CD14-positive monocyte (primary cell): ENCODE measurements at regions of chr9 and their contacts with region 1.

Region 1: DNA sequence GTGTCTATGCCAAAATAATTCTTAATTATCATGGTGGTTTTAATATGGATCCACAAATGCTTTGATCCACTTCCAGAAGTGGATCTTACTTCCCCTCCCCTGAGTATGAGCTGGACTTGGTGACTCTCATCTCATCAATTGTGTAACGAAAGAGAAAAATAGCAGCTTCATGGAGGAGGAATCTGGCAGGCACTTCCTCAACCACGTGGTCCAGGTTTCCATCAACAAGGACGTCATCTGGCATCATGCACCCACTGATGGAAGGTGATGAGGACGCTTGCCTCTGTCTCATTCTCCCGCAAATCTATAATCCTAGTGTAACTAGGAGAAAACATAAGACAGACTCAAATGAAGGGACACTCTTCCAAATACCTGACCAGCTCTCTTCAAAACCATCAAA is 54.6 kb upstream of the S1PR3 start:
- DNase-seq: peak; percentile 86 to 96 (median 93)
- H3K4me3 ChIP-seq: peak overlapping the region in 1 of 3 experiments; percentile 39
- H3K4me3 Mint-ChIP-seq: no peak overlapping the region
- H3K27ac ChIP-seq: peak overlapping the region; percentile 72 to 90
- H3K27ac Mint-ChIP-seq: peak overlapping the region; percentile 90 to 99 (median 94)
- H3K4me1 ChIP-seq: peaks cover 47 to 57% of the 10 kb centered on the region in 2 donors
- H3K4me1 Mint-ChIP-seq: peaks cover 53% of the 10 kb centered on the region
- H3K27me3 ChIP-seq: no peaks in the 10 kb centered on the region
- H3K27me3 Mint-ChIP-seq: peaks cover 1 to 2% (median 2%) of the 10 kb centered on the region in 3 donors
- CTCF ChIP-seq: no peak

Region 2: GRCh38 chr9:88011005-88011766 is 925.5 kb before region 1 on chr9:
- intact Hi-C with region 1: no loop called
- DNase-seq: no peak
- H3K4me3 ChIP-seq: no peak overlapping the region
- H3K4me3 Mint-ChIP-seq: no peak overlapping the region
- H3K27ac ChIP-seq: no peak overlapping the region
- H3K27ac Mint-ChIP-seq: no peak overlapping the region
- H3K4me1 ChIP-seq: no peaks in the 10 kb centered on the region
- H3K4me1 Mint-ChIP-seq: peaks cover 5% of the 10 kb centered on the region
- H3K27me3 ChIP-seq: peaks cover 0 to 14% of the 10 kb centered on the region in 2 donors
- H3K27me3 Mint-ChIP-seq: peaks cover 11 to 18% (median 18%) of the 10 kb centered on the region in 3 donors
- CTCF ChIP-seq: no peak

Region 3: GRCh38 chr9:88980740-88981203 is 44.1 kb after region 1 on chr9:
- intact Hi-C with region 1: no loop called
- DNase-seq: no peak
- H3K4me3 ChIP-seq: no peak overlapping the region
- H3K4me3 Mint-ChIP-seq: no peak overlapping the region
- H3K27ac ChIP-seq: no peak overlapping the region
- H3K27ac Mint-ChIP-seq: no peak overlapping the region
- H3K4me1 ChIP-seq: no peaks in the 10 kb centered on the region
- H3K4me1 Mint-ChIP-seq: peaks cover 7% of the 10 kb centered on the region
- H3K27me3 ChIP-seq: no peaks in the 10 kb centered on the region
- H3K27me3 Mint-ChIP-seq: peaks cover 3 to 7% (median 6%) of the 10 kb centered on the region in 3 donors
- CTCF ChIP-seq: no peak

Region 4: GRCh38 chr9:88991066-88992034 is 54.7 kb after region 1 on chr9 and contains the start of gene S1PR3:
- intact Hi-C with region 1: loop called in 1 of 2 experiments (anchors 5 kb)
- DNase-seq: peak; percentile 32 to 44 (median 43)
- H3K4me3 ChIP-seq: peak within 1 kb of the TSS; percentile 94 to 99 (median 99)
- H3K4me3 Mint-ChIP-seq: peak within 1 kb of the TSS; percentile 96 to 97
- H3K27ac ChIP-seq: peak within 1 kb of the TSS; percentile 76 to 90
- H3K27ac Mint-ChIP-seq: peak within 1 kb of the TSS; percentile 84 to 99 (median 98)
- H3K4me1 ChIP-seq: peaks cover 56 to 66% of the 10 kb centered on the region in 2 donors
- H3K4me1 Mint-ChIP-seq: peaks cover 72% of the 10 kb centered on the region
- H3K27me3 ChIP-seq: no peaks in the 10 kb centered on the region
- H3K27me3 Mint-ChIP-seq: peaks cover 0 to 2% (median 0%) of the 10 kb centered on the region in 3 donors
- CTCF ChIP-seq: no peak
- polyA plus RNA-seq, gene S1PR3: 28.2 to 59.7 (median 30.6) TPM